ENCODE measurements at regions of chr5 and their contacts with region 1.

Region 1: DNA sequence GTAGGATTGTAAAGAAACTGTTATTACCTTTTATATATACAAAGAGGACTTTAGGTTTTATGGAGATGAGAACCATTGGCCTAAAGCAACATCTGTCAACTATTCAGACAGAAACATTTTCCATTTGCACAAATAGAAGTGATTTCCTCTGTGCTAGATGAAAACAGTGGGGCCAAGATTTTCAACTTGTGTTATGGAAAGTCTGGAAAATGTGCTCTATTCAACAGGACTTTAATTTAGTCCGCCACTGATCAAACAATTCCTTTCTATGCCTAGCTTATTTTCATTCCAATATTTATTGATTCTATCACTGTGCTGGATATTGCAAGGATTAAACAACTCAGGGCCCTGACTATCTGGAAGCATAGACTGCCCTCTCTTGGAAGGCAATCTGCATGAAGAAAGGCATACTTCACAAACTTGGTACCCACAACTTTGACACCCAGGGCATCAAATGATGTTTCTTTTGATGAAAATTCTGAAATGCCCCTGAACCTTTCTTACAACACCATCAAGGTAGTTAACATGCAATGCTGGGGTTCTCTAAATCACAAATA is 126.6 kb upstream of the HMHB1 start:
- DNase-seq: no peak
- ATAC-seq: no peak
- H3K4me3 ChIP-seq: no peak overlapping the region
- H3K27ac ChIP-seq: no peak overlapping the region
- H3K4me1 ChIP-seq: peaks cover 2% of the 10 kb centered on the region
- H3K27me3 ChIP-seq: no peaks in the 10 kb centered on the region

Region 2: DNA sequence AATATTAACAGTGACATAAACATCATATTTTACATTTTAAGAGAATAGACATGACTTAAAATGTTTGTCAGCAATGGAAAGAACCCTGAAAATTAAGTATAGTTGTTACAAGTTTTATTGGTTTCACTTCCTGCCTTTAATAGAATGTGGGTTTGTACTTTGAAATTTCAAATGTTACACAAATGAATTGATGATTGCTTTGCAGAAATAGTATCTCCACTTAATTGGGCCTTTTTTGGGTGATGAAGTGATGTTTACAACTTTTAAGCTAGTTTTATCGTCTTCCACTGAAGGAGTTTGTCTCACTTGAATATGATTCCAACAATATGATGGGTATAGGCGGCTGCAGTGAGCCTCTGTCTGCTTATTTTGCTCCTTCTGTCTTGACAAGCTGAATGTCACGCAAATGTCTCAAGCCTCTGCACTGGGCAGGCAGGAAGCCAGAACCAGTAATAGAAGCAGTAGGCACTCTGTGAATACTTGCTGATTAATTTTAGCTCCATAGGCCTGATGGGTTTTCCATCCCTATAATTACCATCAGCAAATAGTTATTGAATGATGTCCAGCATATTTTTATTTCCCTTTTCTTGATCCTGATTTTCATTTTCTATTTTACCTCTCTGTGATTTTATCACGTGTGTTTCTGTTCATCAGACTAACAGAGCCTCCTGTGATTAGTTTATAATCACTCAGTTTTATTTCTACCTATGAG is 271.2 kb before region 1 on chr5:
- intact Hi-C with region 1: loop called in 1 of 4 experiments (anchors 10 kb)
- DNase-seq: peak in 2 of 3 donors; percentile 32 to 55
- ATAC-seq: peak in 1 of 2 donors; percentile 47
- H3K4me3 ChIP-seq: no peak overlapping the region
- H3K27ac ChIP-seq: no peak overlapping the region
- H3K4me1 ChIP-seq: no peaks in the 10 kb centered on the region
- H3K27me3 ChIP-seq: no peaks in the 10 kb centered on the region

Region 3: GRCh38 chr5:143922718-143923117 is 237.4 kb after region 1 on chr5:
- intact Hi-C with region 1: no loop called
- DNase-seq: no peak
- ATAC-seq: peak; percentile 80 to 83
- H3K4me3 ChIP-seq: no peak overlapping the region
- H3K27ac ChIP-seq: no peak overlapping the region
- H3K4me1 ChIP-seq: peaks cover 3% of the 10 kb centered on the region
- H3K27me3 ChIP-seq: no peaks in the 10 kb centered on the region

Region 4: DNA sequence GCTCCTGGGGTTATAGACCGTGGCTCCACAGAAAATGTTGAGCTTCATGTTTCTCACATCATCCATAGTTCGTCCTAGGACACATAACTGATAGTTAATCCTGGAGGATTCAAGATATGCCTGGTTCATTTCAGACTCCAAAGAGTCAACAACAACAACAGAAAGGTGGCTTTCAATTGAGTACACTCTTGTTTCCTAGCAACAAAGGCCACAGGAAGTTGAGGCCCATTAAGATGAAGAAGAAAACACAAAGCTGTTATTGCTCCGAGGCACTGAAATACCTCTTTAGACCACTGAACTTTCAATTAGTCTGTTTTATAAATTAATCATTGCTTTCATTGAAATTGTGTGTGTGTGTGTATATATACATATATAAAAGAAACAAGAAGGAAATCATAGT is 330.6 kb after region 1 on chr5:
- intact Hi-C with region 1: no loop called
- DNase-seq: no peak
- ATAC-seq: no peak
- H3K4me3 ChIP-seq: no peak overlapping the region
- H3K27ac ChIP-seq: no peak overlapping the region
- H3K4me1 ChIP-seq: no peaks in the 10 kb centered on the region
- H3K27me3 ChIP-seq: no peaks in the 10 kb centered on the region

Measured in right cardiac atrium (tissue), 5 donors.